ENCODE measurements at regions of chr1 and their contacts with region 1.

Region 1: DNA sequence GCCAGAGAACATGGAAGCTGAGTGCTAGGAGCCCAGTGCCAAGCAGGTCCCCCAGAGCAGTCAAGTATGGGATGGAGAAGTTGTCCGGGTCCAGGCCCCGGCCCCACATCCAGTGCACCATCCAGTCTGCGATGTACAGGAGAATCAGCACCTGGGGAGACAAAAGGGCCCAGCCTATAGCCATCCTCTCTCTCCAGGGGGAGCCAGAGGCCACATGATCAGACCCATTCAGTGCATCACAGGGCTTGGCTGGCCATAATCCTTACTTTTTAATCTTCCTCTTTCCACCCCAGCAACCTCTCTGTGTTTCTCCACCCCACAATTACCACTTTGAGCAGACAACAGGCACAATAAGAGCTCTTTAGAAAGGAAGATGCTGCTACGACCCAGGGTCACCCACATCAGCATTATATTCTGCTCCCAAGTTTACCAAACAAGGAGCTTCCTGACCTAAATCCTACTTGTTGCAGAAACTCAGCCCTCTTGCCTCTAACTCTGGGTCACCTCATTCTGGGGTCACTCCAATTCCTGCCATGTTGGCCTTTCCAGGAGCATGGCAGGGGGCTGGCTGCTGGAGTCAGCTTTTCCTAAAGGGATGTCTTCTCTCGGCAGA is 16.4 kb upstream of the RAB29 start:
- DNase-seq: peak; percentile 75
- ATAC-seq: peak; percentile 99
- H3K4me3 Mint-ChIP-seq: no peak overlapping the region
- H3K27ac Mint-ChIP-seq: no peak overlapping the region
- H3K4me1 Mint-ChIP-seq: no peaks in the 10 kb centered on the region
- H3K27me3 Mint-ChIP-seq: no peaks in the 10 kb centered on the region

Region 2: GRCh38 chr1:205805082-205805712 is 13.5 kb after region 1 on chr1:
- CTCF ChIA-PET with region 1: interaction called, 11 read pairs
- POLR2A ChIA-PET with region 1: no interaction called
- intact Hi-C with region 1: no loop called
- DNase-seq: peak; percentile 81
- ATAC-seq: peak; percentile 86
- H3K4me3 Mint-ChIP-seq: peak overlapping the region; percentile 62
- H3K27ac Mint-ChIP-seq: peak overlapping the region; percentile 93
- H3K4me1 Mint-ChIP-seq: peaks cover 61% of the 10 kb centered on the region
- H3K27me3 Mint-ChIP-seq: no peaks in the 10 kb centered on the region

Region 3: DNA sequence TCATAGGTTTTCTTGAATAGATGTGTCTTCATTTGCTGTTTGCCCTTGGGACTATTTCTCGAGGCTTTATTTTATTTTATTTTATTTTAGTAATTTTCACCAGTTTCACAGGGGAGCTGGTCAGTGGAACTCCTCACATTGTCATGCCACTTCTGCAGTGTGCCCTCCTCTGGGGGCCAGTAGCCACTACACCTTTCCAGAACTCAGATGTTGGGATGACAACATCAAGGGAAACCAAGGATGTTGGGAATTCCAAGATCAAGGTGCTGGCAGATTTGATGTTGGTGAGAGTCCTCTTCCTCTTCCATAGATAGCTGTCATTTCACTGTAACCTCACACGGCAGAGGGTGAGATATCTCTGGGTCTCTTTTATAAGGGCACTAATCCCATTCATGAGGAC is 116.1 kb after region 1 on chr1:
- CTCF ChIA-PET with region 1: interaction called, 8 read pairs
- POLR2A ChIA-PET with region 1: no interaction called
- intact Hi-C with region 1: loop called in 1 of 2 experiments (anchors 1 kb)
- DNase-seq: no peak
- ATAC-seq: no peak
- H3K4me3 Mint-ChIP-seq: no peak overlapping the region
- H3K27ac Mint-ChIP-seq: no peak overlapping the region
- H3K4me1 Mint-ChIP-seq: no peaks in the 10 kb centered on the region
- H3K27me3 Mint-ChIP-seq: peaks cover 2% of the 10 kb centered on the region

Region 4: GRCh38 chr1:205919026-205919746 is 127.5 kb after region 1 on chr1:
- CTCF ChIA-PET with region 1: interaction called, 11 read pairs
- POLR2A ChIA-PET with region 1: no interaction called
- intact Hi-C with region 1: loop called (anchors 1 kb)
- DNase-seq: peak; percentile 86
- ATAC-seq: peak; percentile 86
- H3K4me3 Mint-ChIP-seq: no peak overlapping the region
- H3K27ac Mint-ChIP-seq: no peak overlapping the region
- H3K4me1 Mint-ChIP-seq: no peaks in the 10 kb centered on the region
- H3K27me3 Mint-ChIP-seq: no peaks in the 10 kb centered on the region

Region 5: DNA sequence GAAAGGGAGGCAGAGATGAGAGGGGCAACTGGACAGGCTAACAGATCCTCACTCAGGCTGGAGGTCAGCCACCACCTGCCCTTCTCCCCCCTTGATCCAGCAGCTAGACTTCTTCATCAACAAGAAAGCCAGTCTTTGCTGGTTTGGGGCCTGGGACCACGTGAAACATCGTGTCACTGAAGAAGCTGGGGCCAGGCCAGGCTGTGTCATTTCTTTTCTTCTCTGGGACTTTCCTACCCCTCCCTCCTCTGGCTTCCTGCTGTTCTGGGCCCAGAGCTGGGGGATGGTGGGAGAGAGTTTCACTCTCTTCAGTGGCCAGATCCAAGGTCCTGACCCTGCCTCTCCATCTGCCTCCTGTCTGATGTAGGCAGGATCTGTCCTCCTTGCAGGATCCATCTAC is 169.7 kb after region 1 on chr1:
- CTCF ChIA-PET with region 1: no interaction called
- POLR2A ChIA-PET with region 1: no interaction called
- intact Hi-C with region 1: loop called in 1 of 2 experiments (anchors 5 kb)
- DNase-seq: peak; percentile 64
- ATAC-seq: peak; percentile 89
- H3K4me3 Mint-ChIP-seq: no peak overlapping the region
- H3K27ac Mint-ChIP-seq: peak overlapping the region; percentile 44
- H3K4me1 Mint-ChIP-seq: peaks cover 9% of the 10 kb centered on the region
- H3K27me3 Mint-ChIP-seq: peaks cover 4% of the 10 kb centered on the region

Region 6: DNA sequence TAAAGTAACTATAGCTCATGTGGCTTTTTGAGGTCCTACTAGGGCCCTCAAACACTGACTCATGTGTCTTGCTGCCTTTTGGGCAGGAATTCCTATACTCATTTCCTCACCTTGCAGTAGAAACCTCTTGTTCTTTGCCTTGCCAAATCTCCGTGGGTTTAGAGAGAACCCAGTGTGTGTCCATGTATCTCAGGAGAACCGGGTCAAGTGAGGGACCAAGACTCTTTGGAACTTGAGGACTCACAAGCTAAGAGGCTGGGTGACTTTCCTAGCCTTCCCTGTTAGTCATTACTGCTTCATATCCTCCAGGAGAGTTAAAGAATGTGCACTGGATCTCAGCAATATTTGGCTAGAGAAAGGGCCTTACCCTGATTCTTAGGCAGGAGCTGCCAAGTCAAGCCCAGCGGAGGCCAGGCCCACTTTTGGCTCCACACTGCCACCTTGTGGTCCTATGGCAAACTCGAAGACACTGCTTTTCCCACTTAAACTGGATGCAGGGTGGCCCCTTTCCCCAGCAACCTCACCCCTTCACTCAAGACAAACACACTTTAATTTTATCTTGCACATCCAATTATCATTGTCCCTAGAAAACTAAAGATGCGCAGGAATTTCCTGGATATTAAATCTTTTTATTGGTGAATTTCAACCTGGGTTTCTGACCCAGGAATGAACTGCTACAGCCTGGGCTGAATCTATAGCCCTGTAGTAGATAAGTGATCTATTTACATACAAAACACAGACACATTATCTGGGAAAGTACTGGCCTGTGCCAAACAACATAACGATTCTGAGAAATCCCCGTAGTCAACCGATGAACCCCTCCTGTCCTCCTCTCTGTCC is 314.9 kb after region 1 on chr1:
- CTCF ChIA-PET with region 1: interaction called, 3 read pairs
- POLR2A ChIA-PET with region 1: no interaction called
- intact Hi-C with region 1: loop called (anchors 5 kb)
- DNase-seq: peak; percentile 88
- ATAC-seq: peak; percentile 90
- H3K4me3 Mint-ChIP-seq: no peak overlapping the region
- H3K27ac Mint-ChIP-seq: no peak overlapping the region
- H3K4me1 Mint-ChIP-seq: no peaks in the 10 kb centered on the region
- H3K27me3 Mint-ChIP-seq: no peaks in the 10 kb centered on the region

Measured in activated CD4-positive, alpha-beta T cell treated with anti-CD3 and anti-CD28 coated beads for 36 hours (primary cell).